ENCODE measurements at regions of chr6 and their contacts with region 1.

Region 1: DNA sequence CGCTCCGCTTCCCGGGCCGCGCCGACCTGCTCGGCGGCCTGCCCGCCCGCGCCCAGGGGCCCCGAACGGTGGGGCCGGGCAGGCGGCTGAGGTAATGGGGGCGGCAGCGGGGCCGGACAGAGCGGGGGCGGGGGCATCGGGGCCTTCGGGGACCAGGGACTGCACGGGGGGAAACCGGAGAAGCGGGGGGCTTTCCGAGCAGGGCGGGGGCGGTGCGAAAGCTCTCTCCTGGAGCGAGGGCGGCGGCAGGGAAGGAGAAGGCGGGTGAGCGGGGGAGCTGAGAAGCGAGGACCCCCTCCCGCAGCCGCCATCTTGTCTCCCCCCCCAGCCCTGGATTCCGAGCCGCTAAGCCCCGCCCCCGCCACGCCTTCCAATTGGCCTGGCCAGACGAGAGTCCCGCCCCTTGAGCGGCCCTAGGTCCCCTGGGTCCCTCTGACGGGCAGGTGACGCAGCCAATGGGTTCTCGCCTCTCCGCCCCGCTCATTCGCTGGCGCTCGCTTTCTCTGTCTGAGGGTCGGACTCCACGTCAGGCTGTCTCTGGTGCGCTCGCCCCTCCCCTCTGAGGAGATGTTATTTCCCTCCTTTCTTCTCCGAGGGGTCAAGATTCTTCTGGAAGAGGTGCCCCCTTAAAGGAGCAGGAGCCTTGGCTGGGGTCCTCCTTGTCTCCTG is 470 bp downstream of the BRPF3 start:
- DNase-seq: peak; percentile 97 to 98
- ATAC-seq: peak; percentile 85 to 87
- H3K4me3 ChIP-seq: peak overlapping the region; percentile 68 to 81 (median 73)
- H3K27ac ChIP-seq: peak overlapping the region; percentile 89 to 98 (median 95)
- H3K4me1 ChIP-seq: peaks cover 8 to 18% of the 10 kb centered on the region in 2 donors
- H3K27me3 ChIP-seq: no peaks in the 10 kb centered on the region
- CTCF ChIP-seq: no peak
- POLR2A ChIP-seq: peak; percentile 79 to 80

Region 2: DNA sequence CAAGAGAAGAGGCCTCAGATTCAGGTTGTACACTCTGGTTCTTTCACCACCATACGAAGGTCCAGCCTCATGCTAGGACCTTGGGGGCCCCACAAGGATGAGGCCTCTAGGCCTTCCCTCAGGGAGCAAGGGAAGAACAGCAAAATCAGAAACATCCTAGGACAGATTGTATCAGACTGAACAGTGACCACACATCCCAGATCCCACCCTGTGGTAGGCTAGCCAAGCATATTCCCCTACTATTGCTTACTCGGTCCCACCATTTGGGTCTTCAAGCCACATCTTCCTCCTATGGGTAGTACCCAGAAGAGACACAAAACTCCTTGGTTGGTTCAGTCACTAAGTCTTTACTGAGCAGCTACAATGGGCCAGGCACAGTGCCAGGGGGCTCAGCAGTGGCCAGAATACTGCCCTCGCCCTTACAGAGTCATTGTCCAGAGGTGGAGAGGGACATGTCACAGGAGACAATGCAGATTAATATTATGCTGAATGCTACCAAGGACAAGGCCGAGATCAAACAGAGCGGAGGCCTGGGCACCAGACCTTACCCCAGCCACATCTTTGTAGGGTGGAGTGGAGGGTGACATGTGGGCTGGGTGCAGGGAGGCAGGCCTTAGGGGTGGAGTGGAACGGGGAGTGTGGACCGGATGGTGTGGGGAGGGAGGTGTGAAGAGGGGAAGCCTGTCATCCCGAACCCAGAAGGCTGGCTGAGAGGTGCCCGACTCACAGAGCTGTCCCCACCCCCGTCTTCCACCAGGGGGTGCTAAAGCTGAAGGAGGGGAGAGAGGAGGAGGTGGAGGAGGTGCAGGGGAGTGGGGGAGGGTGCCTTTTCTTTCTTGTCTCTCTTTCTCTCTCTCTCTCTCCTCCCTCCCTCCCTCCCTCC is 73.5 kb before region 1 on chr6:
- in situ Hi-C with region 1: loop called in 3 of 4 experiments (anchors 5 to 10 kb)
- intact Hi-C with region 1: loop called (anchors 1 kb)
- DNase-seq: peak; percentile 61 to 77
- ATAC-seq: peak; percentile 65 to 87
- H3K4me3 ChIP-seq: peak overlapping the region in 1 of 4 donors; percentile 11
- H3K27ac ChIP-seq: no peak overlapping the region
- H3K4me1 ChIP-seq: peaks cover 4 to 23% of the 10 kb centered on the region in 2 donors
- H3K27me3 ChIP-seq: peaks cover 0 to 3% (median 0%) of the 10 kb centered on the region in 3 donors
- CTCF ChIP-seq: peak; percentile 45 to 82 (median 77)
- POLR2A ChIP-seq: no peak

Region 3: DNA sequence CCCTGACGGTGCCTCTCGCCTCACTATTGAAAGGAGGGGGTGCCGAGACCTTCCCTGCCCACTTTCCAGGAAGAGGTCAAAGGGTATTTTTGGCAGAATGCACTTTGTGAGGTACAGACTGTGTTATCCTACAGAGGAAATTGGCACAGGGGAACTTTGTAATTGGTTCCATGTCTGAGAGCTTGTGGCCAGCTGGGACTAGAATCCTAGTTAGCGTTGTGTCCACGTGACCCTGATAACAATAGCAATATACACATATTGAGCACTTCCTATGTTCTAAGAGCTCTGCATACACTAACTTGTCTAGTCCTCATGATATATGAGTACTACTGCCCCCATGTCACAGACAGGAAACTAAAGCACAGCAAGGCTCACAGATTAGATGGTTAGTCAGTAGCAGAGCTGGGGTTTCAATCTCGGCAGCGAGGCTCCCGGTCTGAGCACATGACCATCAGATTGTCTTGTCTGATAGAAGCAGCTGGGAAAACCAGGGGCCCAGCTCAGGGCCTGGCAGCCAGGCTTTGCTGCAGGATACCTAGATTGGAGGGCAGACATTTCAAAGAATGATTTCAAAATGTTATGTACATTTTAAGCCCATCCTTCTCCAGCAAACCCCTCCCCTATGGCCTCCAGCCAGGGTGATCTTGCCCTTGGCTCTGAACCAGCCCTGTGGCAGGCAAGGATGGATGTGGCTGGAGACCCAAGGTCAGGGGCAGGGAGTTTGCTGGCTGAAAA is 65.3 kb before region 1 on chr6:
- in situ Hi-C with region 1: loop called in 2 of 4 experiments (anchors 5 to 10 kb)
- intact Hi-C with region 1: no loop called
- DNase-seq: peak in 1 of 2 donors; percentile 12
- ATAC-seq: no peak
- H3K4me3 ChIP-seq: peak overlapping the region in 3 of 4 donors; percentile 38 to 44 (median 41)
- H3K27ac ChIP-seq: no peak overlapping the region
- H3K4me1 ChIP-seq: peaks cover 5% of the 10 kb centered on the region in 2 donors
- H3K27me3 ChIP-seq: peaks cover 10 to 23% (median 12%) of the 10 kb centered on the region in 3 donors
- CTCF ChIP-seq: no peak
- POLR2A ChIP-seq: no peak

Region 4: GRCh38 chr6:36241728-36242127 is 44.7 kb after region 1 on chr6:
- in situ Hi-C with region 1: no loop called
- intact Hi-C with region 1: no loop called
- DNase-seq: no peak
- ATAC-seq: no peak
- H3K4me3 ChIP-seq: no peak overlapping the region
- H3K27ac ChIP-seq: no peak overlapping the region
- H3K4me1 ChIP-seq: no peaks in the 10 kb centered on the region
- H3K27me3 ChIP-seq: no peaks in the 10 kb centered on the region
- CTCF ChIP-seq: no peak
- POLR2A ChIP-seq: no peak

Measured in gastrocnemius medialis (tissue), 4 donors.